Left lung (tissue), 14 donors: ENCODE measurements at regions of chr12 and their contacts with region 1.

Region 1: GRCh38 chr12:50517456-50518048 is 12.8 kb downstream of the DIP2B start:
- DNase-seq: no peak
- ATAC-seq: peak; percentile 76
- H3K4me3 ChIP-seq: no peak overlapping the region
- H3K27ac ChIP-seq: peak overlapping the region; percentile 54 to 91
- H3K4me1 ChIP-seq: peaks cover 10 to 87% of the 10 kb centered on the region in 2 donors
- H3K27me3 ChIP-seq: no peaks in the 10 kb centered on the region
- CTCF ChIP-seq: no peak

Region 2: DNA sequence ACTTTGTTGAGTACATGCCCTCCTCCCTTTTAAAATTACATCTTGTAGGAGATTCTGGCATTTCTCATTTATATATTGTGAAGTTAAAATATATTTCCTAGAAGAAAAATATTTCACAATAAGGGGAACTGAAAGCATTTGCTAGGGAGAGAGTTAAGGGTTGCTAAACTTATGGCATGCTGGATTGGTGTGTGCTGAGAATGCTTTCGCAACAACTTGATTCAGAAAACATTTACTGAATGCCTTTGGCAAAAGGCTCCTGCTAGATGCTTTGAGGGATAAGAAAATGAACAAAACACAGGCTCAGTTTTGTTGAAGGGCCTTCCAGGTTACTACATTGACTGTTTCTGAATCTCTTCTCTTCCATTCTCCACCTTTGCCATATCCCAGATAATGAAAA is 54.7 kb after region 1 on chr12:
- intact Hi-C with region 1: loop called in 1 of 2 experiments (anchors 10 kb)
- DNase-seq: peak in 2 of 4 donors; percentile 53 to 81
- ATAC-seq: peak; percentile 81
- H3K4me3 ChIP-seq: no peak overlapping the region
- H3K27ac ChIP-seq: peak overlapping the region; percentile 1 to 31
- H3K4me1 ChIP-seq: peaks cover 30 to 84% of the 10 kb centered on the region in 2 donors
- H3K27me3 ChIP-seq: no peaks in the 10 kb centered on the region
- CTCF ChIP-seq: no peak